Aorta (tissue), 5 donors: ENCODE measurements at regions of chr14 and their contacts with region 1.

Region 1: DNA sequence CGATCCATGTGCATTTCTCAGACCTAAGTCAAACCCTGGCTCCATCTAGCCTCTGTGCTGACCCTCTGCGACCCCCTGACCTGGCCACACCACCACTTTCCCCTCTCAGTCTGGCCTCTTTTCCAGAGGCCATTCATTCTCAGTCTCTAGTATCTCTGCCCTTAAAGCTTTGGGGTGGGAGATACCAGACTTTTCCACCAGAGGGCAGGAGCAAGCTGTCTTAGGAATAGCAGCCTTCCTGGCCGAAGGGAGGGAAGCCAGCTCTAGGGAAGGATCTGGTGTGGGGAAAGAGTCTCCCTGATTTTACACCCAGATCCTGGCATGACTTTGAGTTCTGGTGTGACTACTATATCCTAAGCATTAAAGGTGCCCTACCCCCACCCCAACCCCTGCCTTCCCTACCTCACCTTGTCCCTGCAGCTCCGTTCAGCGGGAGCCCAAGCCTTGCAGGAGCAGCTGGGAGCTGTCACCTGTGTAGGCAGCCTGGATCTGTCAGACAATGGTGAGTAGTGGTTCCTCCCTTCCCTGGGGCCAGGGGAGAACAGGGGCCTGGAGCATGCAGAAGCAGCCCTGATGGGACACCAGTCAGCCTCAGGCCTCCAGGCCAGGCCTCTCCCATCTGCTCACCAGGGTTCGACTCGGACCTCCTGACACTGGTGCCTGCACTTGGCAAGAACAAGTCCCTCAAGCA is 6.6 kb downstream of the CARMIL3 start:
- DNase-seq: peak; percentile 78 to 83
- ATAC-seq: peak; percentile 49
- H3K4me3 ChIP-seq: no peak overlapping the region
- H3K27ac ChIP-seq: no peak overlapping the region
- H3K4me1 ChIP-seq: no peaks in the 10 kb centered on the region
- H3K27me3 ChIP-seq: no peaks in the 10 kb centered on the region

Region 2: GRCh38 chr14:23528555-23528954 is 529.9 kb before region 1 on chr14:
- intact Hi-C with region 1: no loop called
- DNase-seq: no peak
- ATAC-seq: no peak
- H3K4me3 ChIP-seq: no peak overlapping the region
- H3K27ac ChIP-seq: no peak overlapping the region
- H3K4me1 ChIP-seq: no peaks in the 10 kb centered on the region
- H3K27me3 ChIP-seq: no peaks in the 10 kb centered on the region

Region 3: DNA sequence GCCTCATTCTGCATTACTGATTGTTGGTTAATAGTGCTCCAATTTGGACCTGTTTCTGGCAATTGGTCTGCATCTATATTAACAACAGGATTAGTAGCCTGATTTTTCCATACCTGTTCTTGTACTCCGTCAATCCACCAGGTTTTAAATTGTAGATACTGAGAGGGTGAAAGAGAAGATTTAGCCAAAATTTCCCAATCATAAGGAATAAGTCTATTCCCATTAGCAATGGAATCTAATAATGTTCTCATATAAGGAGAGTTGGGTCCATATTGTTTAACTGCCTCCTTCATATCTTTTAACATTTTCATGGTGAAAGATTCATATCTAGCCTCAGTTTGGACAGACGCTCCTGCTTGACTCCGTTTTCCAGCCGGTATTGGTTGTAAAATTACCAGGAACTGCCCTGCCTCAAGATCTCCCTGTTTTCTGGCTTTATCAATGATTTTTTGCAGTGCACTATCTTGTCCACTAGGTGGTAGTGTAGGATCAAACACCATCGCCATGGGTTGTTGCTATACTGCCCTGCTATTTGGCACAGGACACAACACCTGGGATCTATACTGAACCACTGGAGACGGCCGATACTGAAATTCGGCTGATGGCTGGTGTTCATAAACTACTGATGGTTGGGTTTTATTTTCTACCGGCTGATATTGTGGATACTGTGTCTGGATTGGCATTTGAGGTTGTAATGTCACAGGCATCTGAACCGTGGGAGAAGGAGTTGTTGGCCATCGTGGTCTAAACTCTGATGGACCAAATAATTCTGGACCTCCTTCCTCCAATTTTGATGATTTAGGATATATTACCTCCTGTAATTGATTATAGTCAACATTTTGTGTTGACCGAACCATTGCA is 44.5 kb before region 1 on chr14:
- intact Hi-C with region 1: loop called in 1 of 2 experiments (anchors 1 kb)
- DNase-seq: no peak
- ATAC-seq: peak; percentile 86
- H3K4me3 ChIP-seq: no peak overlapping the region
- H3K27ac ChIP-seq: no peak overlapping the region
- H3K4me1 ChIP-seq: no peaks in the 10 kb centered on the region
- H3K27me3 ChIP-seq: no peaks in the 10 kb centered on the region

Region 4: DNA sequence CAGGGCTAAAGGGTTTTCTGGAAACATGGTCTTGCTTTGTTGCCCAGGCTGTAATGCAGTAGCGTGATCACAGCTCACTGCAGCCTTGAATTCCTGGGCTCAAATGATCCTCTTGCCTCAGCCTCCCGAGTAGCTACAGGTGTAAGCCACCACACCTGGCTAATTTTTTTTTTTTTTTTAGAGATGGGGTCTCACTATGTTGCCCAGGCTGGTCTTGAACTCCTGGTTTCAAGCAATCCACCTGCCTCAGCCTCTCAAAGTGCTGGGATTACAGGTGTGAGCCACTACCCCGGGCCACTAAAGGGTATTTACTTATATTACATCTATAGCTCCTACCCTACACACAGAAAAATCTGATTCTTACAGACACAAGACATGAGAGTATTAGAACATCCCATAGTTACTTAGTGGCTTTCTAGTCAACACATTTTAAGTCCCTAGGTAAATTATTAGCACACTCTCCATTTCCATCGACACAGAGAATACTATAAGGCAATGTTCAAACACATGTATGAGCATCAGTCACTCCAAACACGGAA is 50.0 kb after region 1 on chr14:
- intact Hi-C with region 1: loop called (anchors 1 to 5 kb)
- DNase-seq: no peak
- ATAC-seq: no peak
- H3K4me3 ChIP-seq: no peak overlapping the region
- H3K27ac ChIP-seq: no peak overlapping the region
- H3K4me1 ChIP-seq: no peaks in the 10 kb centered on the region
- H3K27me3 ChIP-seq: no peaks in the 10 kb centered on the region